ENCODE measurements at regions of chr1 and their contacts with region 1.

Region 1: GRCh38 chr1:172638885-172639831 is 19.7 kb upstream of the FASLG start:
- DNase-seq: peak; percentile 34 to 81 (median 59)
- ATAC-seq: peak; percentile 78
- H3K4me3 ChIP-seq: peak overlapping the region; percentile 25
- H3K4me3 Mint-ChIP-seq: peak overlapping the region; percentile 54
- H3K27ac ChIP-seq: peak overlapping the region; percentile 37 to 52
- H3K27ac Mint-ChIP-seq: peak overlapping the region; percentile 89
- H3K4me1 ChIP-seq: peaks cover 67% of the 10 kb centered on the region
- H3K4me1 Mint-ChIP-seq: peaks cover 75% of the 10 kb centered on the region
- H3K27me3 ChIP-seq: no peaks in the 10 kb centered on the region
- H3K27me3 Mint-ChIP-seq: no peaks in the 10 kb centered on the region
- CTCF ChIP-seq: no peak

Region 2: DNA sequence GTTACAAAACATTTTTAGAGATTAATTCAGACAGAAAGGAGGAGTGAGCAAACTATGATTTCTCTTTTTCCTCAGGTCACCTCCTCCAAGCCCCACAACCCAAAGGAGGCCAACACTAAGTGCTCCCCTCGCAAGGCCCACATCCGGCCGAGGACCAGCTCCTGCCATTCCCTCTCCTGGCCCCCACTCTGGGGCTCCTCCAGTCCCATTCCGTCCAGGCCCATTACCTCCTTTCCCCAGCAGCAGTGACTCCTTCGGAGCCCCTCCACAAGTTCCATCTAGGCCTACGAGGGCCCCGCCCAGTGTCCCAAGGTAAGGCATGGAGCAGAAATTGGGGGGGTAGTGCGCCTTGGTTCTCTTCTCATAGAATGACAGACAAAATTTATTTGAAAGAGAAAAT is 250.7 kb before region 1 on chr1:
- CTCF ChIA-PET with region 1: no interaction called
- POLR2A ChIA-PET with region 1: no interaction called
- intact Hi-C with region 1: no loop called
- DNase-seq: no peak
- ATAC-seq: no peak
- H3K4me3 ChIP-seq: no peak overlapping the region
- H3K4me3 Mint-ChIP-seq: no peak overlapping the region
- H3K27ac ChIP-seq: no peak overlapping the region
- H3K27ac Mint-ChIP-seq: no peak overlapping the region
- H3K4me1 ChIP-seq: peaks cover 10% of the 10 kb centered on the region
- H3K4me1 Mint-ChIP-seq: peaks cover 29% of the 10 kb centered on the region
- H3K27me3 ChIP-seq: no peaks in the 10 kb centered on the region
- H3K27me3 Mint-ChIP-seq: no peaks in the 10 kb centered on the region
- CTCF ChIP-seq: no peak

Region 3: GRCh38 chr1:172466795-172467407 is 172.3 kb before region 1 on chr1:
- CTCF ChIA-PET with region 1: no interaction called
- POLR2A ChIA-PET with region 1: no interaction called
- intact Hi-C with region 1: no loop called
- DNase-seq: no peak
- ATAC-seq: no peak
- H3K4me3 ChIP-seq: no peak overlapping the region
- H3K4me3 Mint-ChIP-seq: no peak overlapping the region
- H3K27ac ChIP-seq: no peak overlapping the region
- H3K27ac Mint-ChIP-seq: no peak overlapping the region
- H3K4me1 ChIP-seq: no peaks in the 10 kb centered on the region
- H3K4me1 Mint-ChIP-seq: no peaks in the 10 kb centered on the region
- H3K27me3 ChIP-seq: no peaks in the 10 kb centered on the region
- H3K27me3 Mint-ChIP-seq: no peaks in the 10 kb centered on the region
- CTCF ChIP-seq: no peak

Region 4: DNA sequence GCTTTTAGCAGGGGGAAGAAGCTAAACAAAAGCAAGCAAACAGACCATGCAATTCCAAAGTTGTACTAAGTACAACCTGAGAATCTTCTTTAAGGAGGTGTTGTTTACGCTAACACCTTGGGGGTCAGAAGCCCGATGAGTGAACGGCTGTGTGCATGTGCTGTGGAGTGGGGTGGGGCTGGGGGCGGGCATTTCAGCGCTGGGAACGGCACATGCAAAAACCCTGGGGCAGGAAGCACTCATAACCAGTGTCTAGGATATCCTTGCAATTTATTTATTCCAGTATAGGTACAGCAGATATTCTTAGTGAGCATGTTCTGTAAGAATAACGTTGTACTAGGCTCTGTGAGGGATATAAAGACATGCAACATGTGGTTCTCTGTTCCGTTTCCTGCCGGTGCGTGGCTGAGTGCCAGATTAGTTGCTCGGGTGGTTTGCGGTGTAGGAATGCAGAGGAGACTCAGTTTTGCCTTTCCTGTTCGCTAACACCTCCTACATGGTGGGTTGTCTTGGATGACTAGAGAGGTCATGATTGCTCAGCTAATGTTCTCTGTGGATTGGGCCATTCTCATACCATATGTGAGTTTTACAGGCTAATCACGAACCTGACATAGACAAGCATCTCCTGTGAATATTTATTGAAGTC is 23.4 kb after region 1 on chr1:
- CTCF ChIA-PET with region 1: interaction called, 3 read pairs
- POLR2A ChIA-PET with region 1: interaction called, 6 read pairs
- intact Hi-C with region 1: loop called in 1 of 2 experiments (anchors 1 kb)
- DNase-seq: peak; percentile 61 to 91 (median 80)
- ATAC-seq: peak; percentile 84
- H3K4me3 ChIP-seq: peak overlapping the region; percentile 60
- H3K4me3 Mint-ChIP-seq: peak overlapping the region; percentile 43
- H3K27ac ChIP-seq: peak overlapping the region in 1 of 2 donors; percentile 26
- H3K27ac Mint-ChIP-seq: peak overlapping the region; percentile 36
- H3K4me1 ChIP-seq: peaks cover 49% of the 10 kb centered on the region
- H3K4me1 Mint-ChIP-seq: peaks cover 64% of the 10 kb centered on the region
- H3K27me3 ChIP-seq: no peaks in the 10 kb centered on the region
- H3K27me3 Mint-ChIP-seq: no peaks in the 10 kb centered on the region
- CTCF ChIP-seq: no peak

Region 5: DNA sequence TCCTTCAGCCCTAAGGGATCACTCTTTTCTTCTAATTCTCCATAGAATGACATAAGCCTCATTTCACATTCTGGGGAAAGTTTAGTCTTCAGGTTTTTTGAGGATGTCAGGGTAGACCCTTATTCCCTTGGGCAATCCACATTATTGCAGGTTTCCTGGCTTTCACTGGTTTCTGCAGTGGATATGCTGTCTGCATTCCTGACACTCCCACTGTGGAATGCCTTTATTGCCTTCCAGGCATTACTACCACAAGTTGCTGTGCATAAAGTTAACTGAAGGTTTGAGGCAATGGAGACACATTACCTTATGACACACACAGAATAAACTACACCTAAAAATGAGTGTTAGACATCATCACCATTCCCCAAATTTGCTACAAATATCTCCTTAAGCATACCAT is 32.4 kb after region 1 on chr1:
- CTCF ChIA-PET with region 1: interaction called, 4 read pairs
- POLR2A ChIA-PET with region 1: interaction called, 9 read pairs
- intact Hi-C with region 1: loop called in 1 of 2 experiments (anchors 1 kb)
- DNase-seq: no peak
- ATAC-seq: no peak
- H3K4me3 ChIP-seq: no peak overlapping the region
- H3K4me3 Mint-ChIP-seq: peak overlapping the region; percentile 13
- H3K27ac ChIP-seq: no peak overlapping the region
- H3K27ac Mint-ChIP-seq: no peak overlapping the region
- H3K4me1 ChIP-seq: peaks cover 37% of the 10 kb centered on the region
- H3K4me1 Mint-ChIP-seq: peaks cover 67% of the 10 kb centered on the region
- H3K27me3 ChIP-seq: no peaks in the 10 kb centered on the region
- H3K27me3 Mint-ChIP-seq: no peaks in the 10 kb centered on the region
- CTCF ChIP-seq: no peak

Region 6: DNA sequence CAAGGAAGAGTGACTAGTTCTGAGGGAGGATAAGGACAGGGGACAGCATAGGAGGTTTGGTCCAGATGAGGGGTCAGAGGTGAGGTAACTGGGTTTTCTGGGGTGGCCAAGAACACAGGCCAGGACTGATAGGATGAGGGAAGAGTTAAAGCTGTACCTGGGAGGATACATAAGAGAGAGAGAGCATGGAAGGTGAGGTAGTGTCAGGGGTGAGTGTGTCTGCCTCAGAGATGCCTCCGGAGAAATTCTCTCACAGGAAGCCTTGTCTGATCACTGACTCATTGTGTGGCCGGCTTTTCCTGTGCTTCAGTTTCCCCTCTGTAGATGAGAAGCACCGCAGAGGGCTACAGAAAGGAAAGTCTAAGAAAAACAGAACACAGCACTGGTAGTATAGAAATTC is 60.0 kb after region 1 on chr1:
- CTCF ChIA-PET with region 1: no interaction called
- POLR2A ChIA-PET with region 1: interaction called, 4 read pairs
- intact Hi-C with region 1: loop called in 1 of 2 experiments (anchors 1 kb)
- DNase-seq: peak; percentile 45 to 90 (median 67)
- ATAC-seq: peak; percentile 84
- H3K4me3 ChIP-seq: no peak overlapping the region
- H3K4me3 Mint-ChIP-seq: peak overlapping the region; percentile 46
- H3K27ac ChIP-seq: peak overlapping the region; percentile 73 to 83
- H3K27ac Mint-ChIP-seq: no peak overlapping the region
- H3K4me1 ChIP-seq: peaks cover 70% of the 10 kb centered on the region
- H3K4me1 Mint-ChIP-seq: peaks cover 6% of the 10 kb centered on the region
- H3K27me3 ChIP-seq: no peaks in the 10 kb centered on the region
- H3K27me3 Mint-ChIP-seq: no peaks in the 10 kb centered on the region
- CTCF ChIP-seq: no peak

Region 7: GRCh38 chr1:172708452-172708851 is 69.3 kb after region 1 on chr1:
- CTCF ChIA-PET with region 1: interaction called, 3 read pairs
- POLR2A ChIA-PET with region 1: interaction called, 10 read pairs
- intact Hi-C with region 1: loop called in 1 of 2 experiments (anchors 2 kb)
- DNase-seq: peak in 7 of 14 experiments; percentile 4 to 72 (median 49)
- ATAC-seq: peak; percentile 86
- H3K4me3 ChIP-seq: peak overlapping the region; percentile 6
- H3K4me3 Mint-ChIP-seq: peak overlapping the region; percentile 26
- H3K27ac ChIP-seq: no peak overlapping the region
- H3K27ac Mint-ChIP-seq: peak overlapping the region; percentile 50
- H3K4me1 ChIP-seq: peaks cover 34% of the 10 kb centered on the region
- H3K4me1 Mint-ChIP-seq: peaks cover 25% of the 10 kb centered on the region
- H3K27me3 ChIP-seq: no peaks in the 10 kb centered on the region
- H3K27me3 Mint-ChIP-seq: no peaks in the 10 kb centered on the region
- CTCF ChIP-seq: no peak

Region 8: GRCh38 chr1:174040387-174040786 is 1401.2 kb after region 1 on chr1:
- CTCF ChIA-PET with region 1: no interaction called
- POLR2A ChIA-PET with region 1: no interaction called
- intact Hi-C with region 1: no loop called
- DNase-seq: no peak
- ATAC-seq: no peak
- H3K4me3 ChIP-seq: no peak overlapping the region
- H3K4me3 Mint-ChIP-seq: no peak overlapping the region
- H3K27ac ChIP-seq: no peak overlapping the region
- H3K27ac Mint-ChIP-seq: no peak overlapping the region
- H3K4me1 ChIP-seq: no peaks in the 10 kb centered on the region
- H3K4me1 Mint-ChIP-seq: peaks cover 5% of the 10 kb centered on the region
- H3K27me3 ChIP-seq: no peaks in the 10 kb centered on the region
- H3K27me3 Mint-ChIP-seq: no peaks in the 10 kb centered on the region
- CTCF ChIP-seq: no peak

Measured in CD4-positive, alpha-beta T cell (primary cell).